SK-N-SH (cell line): ENCODE measurements at regions of chr2 and their contacts with region 1.

Region 1: GRCh38 chr2:239991689-239992314 is 33.3 kb downstream of the NDUFA10 start:
- DNase-seq: peak; percentile 63
- H3K4me3 ChIP-seq: peak overlapping the region in 1 of 2 experiments; percentile 33; a peak in 1 of 4 replicates
- H3K27ac ChIP-seq: no peak overlapping the region
- H3K4me1 ChIP-seq: peaks cover 0 to 7% of the 10 kb centered on the region in 2 experiments; a peak in 1 of 4 replicates
- H3K27me3 ChIP-seq: no peaks in the 10 kb centered on the region
- CTCF ChIP-seq: peak; percentile 95
- EP300 ChIP-seq: no peak
- RAD21 ChIP-seq: peak; percentile 88

Region 2: GRCh38 chr2:239934571-239935171 is 57.1 kb before region 1 on chr2:
- CTCF ChIA-PET with region 1: interaction called, 58 read pairs
- POLR2A ChIA-PET with region 1: no interaction called
- DNase-seq: peak; percentile 78
- H3K4me3 ChIP-seq: peak overlapping the region in 1 of 2 experiments; percentile 40; a peak in 1 of 4 replicates
- H3K27ac ChIP-seq: no peak overlapping the region
- H3K4me1 ChIP-seq: peaks cover 0 to 5% of the 10 kb centered on the region in 2 experiments; a peak in 1 of 4 replicates
- H3K27me3 ChIP-seq: no peaks in the 10 kb centered on the region
- CTCF ChIP-seq: peak; percentile 35
- EP300 ChIP-seq: no peak
- RAD21 ChIP-seq: peak; percentile 59

Region 3: GRCh38 chr2:239959059-239959971 is 32.5 kb before region 1 on chr2:
- CTCF ChIA-PET with region 1: interaction called, 34 read pairs
- POLR2A ChIA-PET with region 1: no interaction called
- DNase-seq: no peak
- H3K4me3 ChIP-seq: no peak overlapping the region
- H3K27ac ChIP-seq: no peak overlapping the region; a peak in 1 of 4 replicates
- H3K4me1 ChIP-seq: peaks cover 0 to 10% of the 10 kb centered on the region in 2 experiments; a peak in 1 of 4 replicates
- H3K27me3 ChIP-seq: no peaks in the 10 kb centered on the region
- CTCF ChIP-seq: no peak
- EP300 ChIP-seq: no peak
- RAD21 ChIP-seq: no peak

Region 4: DNA sequence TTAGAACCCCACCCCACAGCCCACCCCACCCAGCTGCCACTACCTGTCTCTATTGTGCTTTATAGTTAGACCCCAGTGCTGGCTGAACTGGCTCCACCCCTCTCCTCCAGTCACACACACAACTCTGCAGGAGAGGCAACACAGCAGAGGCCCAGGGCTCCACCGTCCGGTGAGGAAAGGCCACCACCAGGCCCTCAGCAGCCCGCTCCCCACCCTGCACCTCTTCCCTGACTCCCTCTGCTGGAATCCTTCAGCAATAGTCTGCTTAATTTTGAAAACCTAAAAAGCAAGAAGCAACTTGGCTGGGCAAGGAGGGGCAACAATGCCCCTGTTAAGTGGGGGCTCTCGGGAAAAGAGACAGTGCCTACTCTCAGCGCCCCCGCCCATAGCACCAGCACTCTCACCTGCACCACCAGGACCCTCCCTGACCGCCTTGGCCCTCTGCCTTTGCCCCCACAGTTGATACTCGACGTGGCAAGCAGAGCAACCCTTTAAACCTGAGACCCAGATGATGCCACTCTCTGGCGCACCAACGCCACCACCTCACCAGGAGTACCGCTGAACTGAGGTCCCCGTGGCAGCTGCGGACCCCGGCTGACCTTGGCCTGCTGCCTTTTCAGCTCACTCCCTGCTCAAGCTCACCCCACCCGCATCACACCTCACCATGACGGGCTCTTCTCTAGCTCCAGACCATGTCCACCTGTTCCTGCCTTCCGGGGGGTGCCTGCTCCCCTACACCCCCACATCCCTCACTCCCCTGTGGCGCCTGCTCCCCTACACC is 12.4 kb before region 1 on chr2:
- CTCF ChIA-PET with region 1: interaction called, 26 read pairs
- POLR2A ChIA-PET with region 1: no interaction called
- DNase-seq: no peak
- H3K4me3 ChIP-seq: no peak overlapping the region
- H3K27ac ChIP-seq: no peak overlapping the region
- H3K4me1 ChIP-seq: no peaks in the 10 kb centered on the region
- H3K27me3 ChIP-seq: no peaks in the 10 kb centered on the region
- CTCF ChIP-seq: no peak
- EP300 ChIP-seq: no peak
- RAD21 ChIP-seq: no peak

Region 5: GRCh38 chr2:240021488-240022104 is 29.8 kb after region 1 on chr2:
- CTCF ChIA-PET with region 1: interaction called, 17 read pairs
- POLR2A ChIA-PET with region 1: no interaction called
- DNase-seq: peak; percentile 85
- H3K4me3 ChIP-seq: no peak overlapping the region; a peak in 1 of 4 replicates
- H3K27ac ChIP-seq: no peak overlapping the region
- H3K4me1 ChIP-seq: peaks cover 6 to 10% of the 10 kb centered on the region in 2 experiments; a peak in 3 of 4 replicates
- H3K27me3 ChIP-seq: no peaks in the 10 kb centered on the region
- CTCF ChIP-seq: peak; percentile 83
- EP300 ChIP-seq: no peak
- RAD21 ChIP-seq: peak; percentile 57